Activated naive CD4-positive, alpha-beta T cell treated with anti-CD3 and anti-CD28 coated beads for 36 hours (primary cell): ENCODE measurements at regions of chr10 and their contacts with region 1.

Region 1: GRCh38 chr10:6014241-6014761 is 37.0 kb upstream of the IL15RA start:
- DNase-seq: peak; percentile 83
- H3K4me3 Mint-ChIP-seq: no peak overlapping the region
- H3K27ac Mint-ChIP-seq: peak overlapping the region; percentile 91
- H3K4me1 Mint-ChIP-seq: peaks cover 61% of the 10 kb centered on the region
- H3K27me3 Mint-ChIP-seq: no peaks in the 10 kb centered on the region

Region 2: GRCh38 chr10:6036861-6037321 is 22.6 kb after region 1 on chr10:
- CTCF ChIA-PET with region 1: interaction called, 9 read pairs
- intact Hi-C with region 1: loop called (anchors 2 kb)
- DNase-seq: peak; percentile 46
- H3K4me3 Mint-ChIP-seq: peak overlapping the region; percentile 6
- H3K27ac Mint-ChIP-seq: peak overlapping the region; percentile 76
- H3K4me1 Mint-ChIP-seq: peaks cover 81% of the 10 kb centered on the region
- H3K27me3 Mint-ChIP-seq: no peaks in the 10 kb centered on the region

Region 3: GRCh38 chr10:6056411-6057135 is 42.3 kb after region 1 on chr10:
- CTCF ChIA-PET with region 1: interaction called, 10 read pairs
- intact Hi-C with region 1: no loop called
- DNase-seq: peak; percentile 3
- H3K4me3 Mint-ChIP-seq: peak overlapping the region; percentile 86
- H3K27ac Mint-ChIP-seq: peak overlapping the region; percentile 94
- H3K4me1 Mint-ChIP-seq: peaks cover 66% of the 10 kb centered on the region
- H3K27me3 Mint-ChIP-seq: no peaks in the 10 kb centered on the region